ENCODE measurements at regions of chr16 and their contacts with region 1.

Region 1: DNA sequence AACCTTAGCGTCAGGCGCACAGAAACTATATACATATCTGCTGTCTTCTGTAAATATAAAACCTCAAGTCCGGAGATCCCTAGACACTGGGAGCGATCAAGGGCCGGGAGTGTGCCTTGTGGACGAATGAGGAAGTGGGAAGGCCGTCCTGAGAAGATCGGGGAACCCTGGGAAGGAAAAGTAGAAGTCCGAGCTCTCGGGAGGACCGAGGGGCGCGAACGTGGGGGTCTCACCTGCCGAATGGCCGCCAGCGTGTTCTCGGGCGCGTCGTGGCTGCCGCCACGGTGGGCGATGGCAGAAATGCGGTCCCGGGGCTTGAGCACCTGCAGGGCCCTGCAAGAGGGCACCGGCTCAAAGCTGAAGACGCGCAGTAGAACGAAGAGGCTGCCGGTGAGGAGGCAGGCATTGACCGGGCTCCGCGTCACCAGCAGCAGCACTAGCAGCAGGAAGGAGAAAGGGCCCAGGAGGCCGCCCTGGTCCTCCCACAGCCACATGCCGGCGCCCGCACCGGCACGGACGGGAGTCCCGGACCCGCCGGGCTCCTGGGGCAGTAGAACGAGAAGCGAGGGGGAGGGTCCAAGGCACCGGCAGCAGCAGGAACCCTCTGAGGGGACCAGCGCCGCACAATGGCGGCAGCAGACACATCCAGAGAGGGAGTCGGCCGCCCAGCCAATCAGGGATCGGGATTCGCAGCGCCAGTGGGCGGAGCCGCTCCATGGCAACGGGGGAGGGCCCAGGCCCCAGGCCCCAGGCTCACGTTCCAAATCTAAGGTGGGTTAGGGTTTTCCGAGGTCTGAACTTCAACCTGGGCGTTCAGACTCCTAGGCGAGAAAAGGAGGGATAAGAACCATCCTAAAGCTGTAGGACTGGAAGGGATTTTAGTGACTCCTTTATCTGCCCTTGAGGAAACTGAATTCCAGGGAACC is at the start of gene GDE1:
- DNase-seq: peak; percentile 96
- H3K4me3 Mint-ChIP-seq: peak within 1 kb of the TSS; percentile 84
- H3K27ac Mint-ChIP-seq: peak within 1 kb of the TSS; percentile 52
- H3K4me1 Mint-ChIP-seq: peaks cover 45% of the 10 kb centered on the region
- H3K27me3 Mint-ChIP-seq: no peaks in the 10 kb centered on the region
- total RNA-seq, gene GDE1: 13.3 to 17.1 TPM

Region 2: DNA sequence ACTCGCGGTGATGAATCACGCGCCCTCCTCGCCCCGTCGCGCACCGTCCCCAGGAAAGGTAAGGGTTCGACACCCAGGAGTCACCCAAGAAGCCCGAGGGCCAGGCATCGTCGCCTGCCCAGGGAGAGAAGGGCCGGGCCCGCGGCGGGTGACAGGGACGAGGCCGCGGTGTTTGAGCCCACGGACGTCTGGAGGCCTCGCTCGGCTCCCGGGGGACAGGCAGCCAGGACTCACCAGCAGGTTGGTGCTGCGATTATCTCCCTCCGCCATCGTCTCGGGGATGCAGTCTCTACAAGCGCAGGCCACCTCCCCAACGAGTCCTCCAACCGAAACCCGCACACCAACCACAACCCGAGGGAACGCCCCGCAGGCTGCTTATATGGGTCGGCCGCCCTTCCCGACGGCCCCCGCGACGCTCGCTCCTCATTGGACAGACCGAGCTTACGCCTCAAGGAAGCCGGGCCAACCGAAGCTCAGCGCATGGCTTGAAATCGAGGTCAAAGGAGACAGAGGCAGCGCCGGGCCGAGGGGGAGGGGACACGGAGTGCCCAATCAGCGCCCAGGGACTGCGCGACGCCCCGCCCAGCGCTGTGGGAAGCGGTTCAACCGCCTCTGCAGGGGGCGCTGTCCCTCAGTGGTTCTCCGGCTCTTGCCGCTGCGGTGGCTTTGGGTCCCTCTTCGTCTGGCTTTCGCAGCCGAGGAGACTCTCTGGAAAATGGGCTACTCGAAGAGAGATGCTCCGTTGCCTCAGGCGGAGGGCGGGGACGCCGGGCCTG is 720.3 kb before region 1 on chr16 and contains the start of gene ARL6IP1:
- CTCF ChIA-PET with region 1: interaction called, 3 read pairs
- intact Hi-C with region 1: loop called (anchors 2 kb)
- DNase-seq: peak; percentile 99
- H3K4me3 Mint-ChIP-seq: peak within 1 kb of the TSS; percentile 87
- H3K27ac Mint-ChIP-seq: peak within 1 kb of the TSS; percentile 98
- H3K4me1 Mint-ChIP-seq: peaks cover 51% of the 10 kb centered on the region
- H3K27me3 Mint-ChIP-seq: no peaks in the 10 kb centered on the region
- total RNA-seq, gene ARL6IP1: 114 to 123 TPM

Region 3: DNA sequence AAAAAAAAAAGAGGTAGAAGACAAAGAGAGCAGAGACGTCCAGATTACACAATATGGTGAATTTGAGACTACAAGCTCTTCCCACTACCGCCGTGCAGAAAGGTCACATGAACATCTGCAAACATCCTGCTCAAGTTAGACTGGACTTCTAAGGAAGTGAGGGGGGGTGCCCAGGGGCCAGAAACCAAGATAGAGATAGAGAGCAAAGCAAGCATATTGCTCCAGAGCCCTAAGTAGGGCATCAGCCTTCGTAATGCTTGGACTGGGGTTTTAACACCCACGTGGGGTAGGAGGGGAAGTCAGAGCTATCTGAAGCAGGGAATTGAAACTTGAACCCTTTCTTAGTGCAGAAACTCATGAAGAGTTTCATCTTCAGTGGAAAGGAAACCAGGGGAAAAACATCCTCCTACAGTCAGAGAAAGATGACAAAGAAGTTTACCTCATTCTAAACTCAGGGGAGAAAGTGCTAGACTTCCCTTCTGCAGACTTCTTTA is 227.5 kb before region 1 on chr16:
- CTCF ChIA-PET with region 1: no interaction called
- intact Hi-C with region 1: loop called (anchors 10 kb)
- DNase-seq: peak; percentile 53
- H3K4me3 Mint-ChIP-seq: no peak overlapping the region
- H3K27ac Mint-ChIP-seq: peak overlapping the region; percentile 42
- H3K4me1 Mint-ChIP-seq: peaks cover 25% of the 10 kb centered on the region
- H3K27me3 Mint-ChIP-seq: peaks cover 15% of the 10 kb centered on the region

Region 4: DNA sequence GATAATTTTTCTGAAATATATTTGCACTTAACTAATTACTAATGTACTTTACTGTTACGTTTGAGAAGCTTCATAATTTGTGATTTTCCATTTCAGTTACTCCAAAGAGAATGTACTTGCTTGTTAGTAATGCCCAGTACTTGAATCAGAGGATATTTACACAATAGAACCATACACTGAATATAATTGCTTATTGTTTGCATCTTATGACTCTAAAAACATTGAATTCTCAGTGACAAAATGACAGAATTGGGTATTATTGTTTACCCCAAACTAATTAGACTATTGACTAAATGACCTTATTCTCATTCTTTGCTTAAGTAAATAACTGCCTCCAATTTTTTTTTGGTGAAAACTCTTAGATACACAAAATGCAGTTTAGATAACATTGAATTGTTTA is 10.9 kb after region 1 on chr16:
- CTCF ChIA-PET with region 1: no interaction called
- intact Hi-C with region 1: no loop called
- DNase-seq: no peak
- H3K4me3 Mint-ChIP-seq: no peak overlapping the region
- H3K27ac Mint-ChIP-seq: no peak overlapping the region
- H3K4me1 Mint-ChIP-seq: no peaks in the 10 kb centered on the region
- H3K27me3 Mint-ChIP-seq: no peaks in the 10 kb centered on the region

Region 5: DNA sequence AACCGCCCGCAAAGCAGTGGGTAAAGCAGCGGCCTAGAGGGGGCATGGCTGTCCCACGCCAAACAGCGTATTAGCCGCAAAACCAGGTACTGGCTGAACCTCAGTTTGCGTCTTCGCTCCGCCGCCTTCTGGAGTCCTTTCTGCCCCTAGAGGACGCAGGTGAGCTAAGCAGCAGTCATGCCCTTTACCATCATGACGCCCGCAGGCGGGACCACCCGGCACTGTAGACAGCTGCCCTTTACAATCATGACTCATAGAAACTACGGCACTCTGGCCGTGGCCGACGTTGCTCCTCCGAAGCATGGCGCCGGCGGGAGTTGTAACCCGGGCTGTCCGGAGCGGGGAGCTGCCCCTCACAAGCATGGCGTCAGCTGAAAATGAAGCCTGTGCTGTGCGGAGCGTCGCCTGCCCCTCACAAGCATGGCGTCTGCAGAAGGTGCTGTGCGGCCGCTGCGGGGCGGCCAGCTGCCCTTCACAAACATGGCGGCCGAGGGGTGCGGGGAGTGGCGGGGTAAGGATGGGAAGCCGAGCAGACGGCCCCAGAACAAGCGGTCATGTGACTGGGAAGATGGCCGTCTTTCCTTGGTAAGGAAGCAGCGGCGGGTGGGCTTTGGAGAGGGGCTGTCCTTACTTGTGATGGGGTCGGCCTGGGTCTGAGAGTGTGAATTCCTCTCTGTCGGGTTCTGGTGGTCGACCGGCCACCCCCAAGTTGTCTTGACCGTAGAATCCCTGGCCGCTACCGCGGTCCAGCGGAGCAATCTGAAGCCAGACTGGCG is 33.6 kb after region 1 on chr16 and contains the start of gene VPS35L:
- CTCF ChIA-PET with region 1: interaction called, 4 read pairs
- intact Hi-C with region 1: loop called (anchors 1 kb)
- DNase-seq: peak; percentile 93
- H3K4me3 Mint-ChIP-seq: peak within 1 kb of the TSS; percentile 91
- H3K27ac Mint-ChIP-seq: peak within 1 kb of the TSS; percentile 89
- H3K4me1 Mint-ChIP-seq: peaks cover 17% of the 10 kb centered on the region
- H3K27me3 Mint-ChIP-seq: no peaks in the 10 kb centered on the region
- total RNA-seq, gene VPS35L: 30.3 to 32.4 TPM

Region 6: DNA sequence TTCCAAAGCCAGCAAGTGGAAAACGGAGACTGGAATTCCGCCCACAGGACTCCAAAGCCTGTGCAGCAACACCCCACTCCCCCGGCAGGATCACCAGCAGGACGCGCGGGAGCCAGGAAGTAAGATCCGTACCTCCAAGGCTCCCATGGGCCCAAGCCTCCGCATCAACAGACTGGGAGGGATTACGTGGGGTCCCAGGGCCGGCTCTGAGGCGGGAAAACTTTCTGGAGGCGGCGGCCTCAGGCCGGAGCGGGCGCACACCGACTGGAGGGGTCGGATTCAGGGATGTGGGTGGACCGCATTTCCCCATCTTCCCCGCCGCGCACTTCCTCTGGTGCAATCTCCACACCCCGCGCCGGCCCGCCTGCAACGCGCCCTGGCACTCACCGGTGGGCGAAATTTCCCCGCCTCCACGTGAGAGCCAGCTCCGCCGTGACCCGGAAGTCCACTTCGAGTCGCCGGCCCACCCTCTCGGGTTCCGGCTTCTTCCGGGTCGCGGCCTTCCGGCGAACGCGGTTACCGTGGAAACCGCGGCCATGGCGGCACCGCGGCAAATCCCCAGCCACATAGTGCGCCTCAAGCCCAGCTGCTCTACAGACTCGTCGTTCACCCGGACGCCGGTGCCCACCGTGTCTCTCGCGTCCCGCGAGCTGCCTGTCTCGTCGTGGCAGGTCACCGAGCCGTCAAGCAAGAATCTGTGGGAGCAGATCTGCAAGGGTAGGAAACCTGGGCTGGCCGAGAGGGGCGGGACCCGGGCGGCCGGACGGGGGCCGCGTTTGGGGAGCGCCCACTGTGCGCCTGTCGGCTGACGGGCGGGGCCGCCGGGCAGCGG is 196.3 kb after region 1 on chr16 and contains the starts of genes IQCK and KNOP1:
- CTCF ChIA-PET with region 1: no interaction called
- intact Hi-C with region 1: loop called (anchors 1 kb)
- DNase-seq: peak; percentile 89
- H3K4me3 Mint-ChIP-seq: peak within 1 kb of the TSS; percentile 91
- H3K27ac Mint-ChIP-seq: peak within 1 kb of the TSS; percentile 78
- H3K4me1 Mint-ChIP-seq: peaks cover 45% of the 10 kb centered on the region
- H3K27me3 Mint-ChIP-seq: no peaks in the 10 kb centered on the region
- total RNA-seq, gene IQCK: 2.8 to 3.9 TPM
- total RNA-seq, gene KNOP1: 24.4 to 26.1 TPM

Region 7: GRCh38 chr16:19745286-19746010 is 223.7 kb after region 1 on chr16:
- CTCF ChIA-PET with region 1: no interaction called
- intact Hi-C with region 1: no loop called
- DNase-seq: no peak
- H3K4me3 Mint-ChIP-seq: no peak overlapping the region
- H3K27ac Mint-ChIP-seq: no peak overlapping the region
- H3K4me1 Mint-ChIP-seq: no peaks in the 10 kb centered on the region
- H3K27me3 Mint-ChIP-seq: no peaks in the 10 kb centered on the region

Measured in activated naive CD4-positive, alpha-beta T cell treated with anti-CD3 and anti-CD28 coated beads for 36 hours (primary cell).